ENCODE measurements at regions of chr16 and their contacts with region 1.

Region 1: DNA sequence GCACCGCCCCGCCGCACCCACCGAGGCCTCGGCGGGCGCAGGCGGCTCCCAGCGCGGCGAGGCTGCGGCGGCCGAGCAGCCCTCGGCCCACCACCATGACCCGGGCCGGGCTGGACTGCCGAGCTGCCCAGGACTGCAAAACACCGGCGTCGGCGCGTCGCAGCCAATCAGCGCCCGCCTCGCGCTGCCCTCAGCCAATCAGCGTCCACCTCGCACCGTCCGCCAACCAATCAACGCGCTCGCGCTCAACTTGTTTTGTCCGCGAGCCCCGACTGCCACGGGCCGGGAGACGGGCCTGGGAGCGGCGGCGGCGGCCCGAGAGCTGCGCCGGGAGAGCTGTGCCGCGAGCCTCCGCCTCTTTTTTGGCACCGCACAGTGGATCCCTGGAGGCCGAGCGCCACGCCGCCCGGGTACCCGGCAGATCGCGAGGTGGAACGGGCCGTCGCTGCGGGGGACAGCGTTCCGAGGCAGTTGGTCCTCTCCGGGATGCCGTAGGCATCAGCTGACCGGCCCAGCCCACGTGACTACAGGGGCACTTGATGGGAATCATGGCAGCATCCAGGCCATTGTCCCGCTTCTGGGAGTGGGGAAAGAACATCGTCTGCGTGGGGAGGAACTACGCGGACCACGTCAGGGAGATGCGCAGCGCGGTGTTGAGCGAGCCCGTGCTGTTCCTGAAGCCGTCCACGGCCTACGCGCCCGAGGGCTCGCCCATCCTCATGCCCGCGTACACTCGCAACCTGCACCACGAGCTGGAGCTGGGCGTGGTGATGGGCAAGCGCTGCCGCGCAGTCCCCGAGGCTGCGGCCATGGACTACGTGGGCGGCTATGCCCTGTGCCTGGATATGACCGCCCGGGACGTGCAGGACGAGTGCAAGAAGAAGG is at the starts of genes FAHD1 and HAGH:
- DNase-seq: peak; percentile 95
- H3K4me3 ChIP-seq: peak within 1 kb of the TSS; percentile 90
- H3K27ac ChIP-seq: peak within 1 kb of the TSS; percentile 75
- H3K4me1 ChIP-seq: peaks cover 12% of the 10 kb centered on the region
- H3K27me3 ChIP-seq: no peaks in the 10 kb centered on the region
- CTCF ChIP-seq: no peak
- total RNA-seq, gene FAHD1: 19.9 and 22.1 TPM in 2 replicates
- total RNA-seq, gene HAGH: 14.4 and 23.4 TPM in 2 replicates

Region 2: GRCh38 chr16:1772736-1773584 is 54.0 kb before region 1 on chr16 and contains the starts of genes EME2 and MRPS34:
- CTCF ChIA-PET with region 1: no interaction called
- POLR2A ChIA-PET with region 1: no interaction called
- intact Hi-C with region 1: loop called (anchors 10 kb)
- DNase-seq: peak; percentile 92
- H3K4me3 ChIP-seq: peak within 1 kb of the TSS; percentile 63
- H3K27ac ChIP-seq: peak within 1 kb of the TSS; percentile 98
- H3K4me1 ChIP-seq: peaks cover 4% of the 10 kb centered on the region
- H3K27me3 ChIP-seq: no peaks in the 10 kb centered on the region
- CTCF ChIP-seq: peak; percentile 64
- total RNA-seq, gene EME2: 19.5 and 19.9 TPM in 2 replicates
- total RNA-seq, gene MRPS34: 247 and 250 TPM in 2 replicates

Region 3: GRCh38 chr16:2246301-2246885 is 419.5 kb after region 1 on chr16:
- CTCF ChIA-PET with region 1: no interaction called
- POLR2A ChIA-PET with region 1: interaction called, 10 read pairs
- intact Hi-C with region 1: no loop called
- DNase-seq: no peak
- H3K4me3 ChIP-seq: no peak overlapping the region
- H3K27ac ChIP-seq: no peak overlapping the region
- H3K4me1 ChIP-seq: peaks cover 11% of the 10 kb centered on the region
- H3K27me3 ChIP-seq: no peaks in the 10 kb centered on the region
- CTCF ChIP-seq: no peak